ENCODE measurements at regions of chr17 and their contacts with region 1.

Region 1: GRCh38 chr17:80981062-80981902 is 10.4 kb upstream of the CHMP6 start:
- DNase-seq: no peak
- H3K4me3 ChIP-seq: peak overlapping the region; percentile 35
- H3K27ac ChIP-seq: no peak overlapping the region
- H3K4me1 ChIP-seq: no peaks in the 10 kb centered on the region
- H3K27me3 ChIP-seq: no peaks in the 10 kb centered on the region
- CTCF ChIP-seq: peak; percentile 65

Region 2: DNA sequence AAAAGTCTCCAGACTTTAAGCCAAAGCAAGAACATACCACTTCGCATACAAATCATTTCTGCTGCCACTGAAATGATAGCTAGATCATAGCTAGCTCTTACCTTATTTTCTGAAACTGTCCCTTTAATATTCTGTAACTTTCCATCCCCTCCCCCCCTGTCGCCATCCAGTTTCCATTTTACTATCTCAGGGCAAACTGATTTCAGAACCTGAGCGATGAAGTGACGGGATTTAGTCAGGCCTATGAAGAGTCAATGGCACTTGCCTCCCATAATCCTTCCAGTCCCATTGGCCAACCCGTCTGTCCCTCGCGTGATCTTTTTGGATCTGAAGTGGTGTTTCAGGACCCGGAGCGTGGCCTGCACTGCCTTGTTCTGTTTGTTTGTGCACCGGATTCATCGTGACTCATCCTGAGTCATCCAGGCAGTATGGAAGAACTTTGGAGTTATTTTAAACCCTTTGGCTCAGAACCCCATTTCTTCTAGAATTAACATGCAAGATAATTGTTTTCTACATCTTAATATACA is 189.5 kb before region 1 on chr17:
- CTCF ChIA-PET with region 1: no interaction called
- POLR2A ChIA-PET with region 1: no interaction called
- intact Hi-C with region 1: no loop called
- DNase-seq: peak; percentile 79
- H3K4me3 ChIP-seq: no peak overlapping the region
- H3K27ac ChIP-seq: peak overlapping the region; percentile 37
- H3K4me1 ChIP-seq: peaks cover 42% of the 10 kb centered on the region
- H3K27me3 ChIP-seq: no peaks in the 10 kb centered on the region
- CTCF ChIP-seq: no peak

Region 3: GRCh38 chr17:80866147-80866793 is 115.0 kb before region 1 on chr17:
- CTCF ChIA-PET with region 1: no interaction called
- POLR2A ChIA-PET with region 1: no interaction called
- intact Hi-C with region 1: loop called (anchors 5 kb)
- DNase-seq: peak; percentile 77
- H3K4me3 ChIP-seq: no peak overlapping the region
- H3K27ac ChIP-seq: no peak overlapping the region
- H3K4me1 ChIP-seq: no peaks in the 10 kb centered on the region
- H3K27me3 ChIP-seq: no peaks in the 10 kb centered on the region
- CTCF ChIP-seq: peak; percentile 84

Region 4: GRCh38 chr17:81034779-81035388 is 53.6 kb after region 1 on chr17 and contains the start of gene BAIAP2:
- CTCF ChIA-PET with region 1: no interaction called
- POLR2A ChIA-PET with region 1: no interaction called
- intact Hi-C with region 1: no loop called
- DNase-seq: peak; percentile 96
- H3K4me3 ChIP-seq: peak within 1 kb of the TSS; percentile 91
- H3K27ac ChIP-seq: peak within 1 kb of the TSS; percentile 70
- H3K4me1 ChIP-seq: peaks cover 29% of the 10 kb centered on the region
- H3K27me3 ChIP-seq: no peaks in the 10 kb centered on the region
- CTCF ChIP-seq: no peak
- total RNA-seq, gene BAIAP2: 51.6 and 54.9 TPM in 2 replicates

Region 5: DNA sequence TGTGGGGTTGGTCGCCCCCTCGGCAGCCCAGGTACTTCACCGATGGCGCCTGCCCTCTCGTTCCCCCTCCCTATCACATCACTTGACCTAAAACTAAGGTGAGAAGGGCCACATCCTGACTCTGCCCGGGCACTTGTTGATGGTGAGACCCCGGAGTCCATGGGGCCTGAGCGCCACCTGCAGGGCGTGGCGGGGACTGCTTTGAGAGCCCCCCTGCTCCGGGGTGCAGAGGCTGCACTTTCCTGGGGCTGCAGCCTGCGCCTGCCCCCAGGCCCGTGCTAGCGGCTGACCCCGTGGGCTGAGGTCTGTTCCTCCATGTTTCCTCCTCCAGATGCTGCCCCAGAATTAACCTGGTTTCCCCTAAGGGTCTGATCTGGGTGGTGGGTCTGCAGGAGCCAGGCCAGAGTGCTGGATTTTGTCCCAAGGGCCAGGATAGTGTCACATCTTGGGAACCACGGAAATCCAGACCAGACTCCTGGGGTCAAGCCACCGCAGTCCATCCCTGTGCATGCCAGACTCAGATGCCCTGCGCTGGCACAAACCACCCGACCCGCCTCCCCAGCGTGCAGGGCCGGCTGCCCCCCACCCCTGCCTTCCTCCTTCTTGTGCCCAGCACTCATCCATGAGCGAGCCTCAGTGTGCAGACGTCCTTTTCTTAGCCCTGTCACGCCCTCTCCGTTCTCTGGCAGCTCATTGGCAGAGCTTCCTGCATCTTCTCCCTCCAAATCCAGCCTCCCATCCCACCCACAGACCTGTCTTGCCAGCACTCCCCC is 260.6 kb after region 1 on chr17:
- CTCF ChIA-PET with region 1: no interaction called
- POLR2A ChIA-PET with region 1: interaction called, 3 read pairs
- intact Hi-C with region 1: loop called (anchors 5 kb)
- DNase-seq: peak; percentile 69
- H3K4me3 ChIP-seq: no peak overlapping the region
- H3K27ac ChIP-seq: no peak overlapping the region
- H3K4me1 ChIP-seq: peaks cover 7% of the 10 kb centered on the region
- H3K27me3 ChIP-seq: no peaks in the 10 kb centered on the region
- CTCF ChIP-seq: peak; percentile 88

Measured in A673 (cell line).